ENCODE measurements at regions of chr9 and their contacts with region 1.

Region 1: GRCh38 chr9:105447814-105448812 is at the start of gene FSD1L:
- DNase-seq: peak; percentile 75 to 94
- H3K4me3 ChIP-seq: peak within 1 kb of the TSS; percentile 64
- H3K27ac ChIP-seq: no peak within 1 kb of the TSS
- H3K4me1 ChIP-seq: peaks cover 14% of the 10 kb centered on the region
- H3K27me3 ChIP-seq: no peaks in the 10 kb centered on the region
- CTCF ChIP-seq: no peak
- total RNA-seq, gene FSD1L: 4.2 and 5.6 TPM in 2 replicates

Region 2: GRCh38 chr9:105233873-105234272 is 214.2 kb before region 1 on chr9:
- CTCF ChIA-PET with region 1: no interaction called
- POLR2A ChIA-PET with region 1: no interaction called
- intact Hi-C with region 1: no loop called
- DNase-seq: no peak
- H3K4me3 ChIP-seq: no peak overlapping the region
- H3K27ac ChIP-seq: no peak overlapping the region
- H3K4me1 ChIP-seq: no peaks in the 10 kb centered on the region
- H3K27me3 ChIP-seq: no peaks in the 10 kb centered on the region
- CTCF ChIP-seq: no peak

Region 3: GRCh38 chr9:105557771-105558610 is 109.9 kb after region 1 on chr9 and contains the start of gene FKTN:
- CTCF ChIA-PET with region 1: no interaction called
- POLR2A ChIA-PET with region 1: no interaction called
- intact Hi-C with region 1: loop called (anchors 2 kb)
- DNase-seq: peak; percentile 77 to 87
- H3K4me3 ChIP-seq: peak within 1 kb of the TSS; percentile 84
- H3K27ac ChIP-seq: peak within 1 kb of the TSS; percentile 20; the same call in 1 of the 2 replicates
- H3K4me1 ChIP-seq: peaks cover 7% of the 10 kb centered on the region; the same call in 1 of the 2 replicates
- H3K27me3 ChIP-seq: no peaks in the 10 kb centered on the region
- CTCF ChIP-seq: no peak
- total RNA-seq, gene FKTN: 25.4 and 32.3 TPM in 2 replicates